B cell (primary cell): ENCODE measurements at regions of chr1 and their contacts with region 1.

Region 1: DNA sequence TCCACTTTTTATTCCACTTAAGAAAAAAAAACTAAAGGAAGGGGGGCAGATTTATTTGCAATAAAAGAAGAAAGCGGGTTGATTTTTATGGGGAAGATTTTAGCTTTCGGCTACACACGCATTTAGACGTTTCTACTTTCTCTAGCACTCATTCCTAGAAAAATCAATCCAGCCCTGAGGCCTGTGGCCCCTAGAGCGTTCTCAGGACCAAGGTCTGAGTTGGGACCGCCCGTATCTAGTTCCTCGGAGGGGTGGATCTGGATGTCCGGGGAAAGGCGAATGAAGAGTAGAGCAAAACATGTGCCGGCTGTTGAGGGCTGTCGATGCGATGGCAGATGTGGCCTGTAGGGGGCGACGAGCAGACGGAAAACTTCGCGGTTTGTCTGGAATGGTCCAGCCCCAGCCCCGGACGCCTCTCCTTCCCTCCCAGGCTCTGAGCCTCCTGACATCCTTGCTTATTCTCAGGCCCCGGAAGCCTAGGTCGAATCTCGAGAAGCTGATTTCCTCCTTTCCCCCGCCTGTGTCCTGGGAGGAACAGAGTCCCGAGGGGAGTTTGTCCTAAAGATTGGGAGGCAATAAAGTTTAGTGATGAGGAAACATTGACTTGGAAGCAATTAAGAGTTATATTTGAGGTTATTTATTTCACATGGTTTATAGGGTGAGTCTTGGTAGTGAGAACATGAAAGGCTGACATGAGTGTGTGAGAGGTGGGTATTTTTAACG is 5.2 kb downstream of the FOXD3 start:
- DNase-seq: peak; percentile 60
- ATAC-seq: no peak
- H3K4me3 ChIP-seq: no peak overlapping the region
- H3K4me3 Mint-ChIP-seq: no peak overlapping the region
- H3K27ac ChIP-seq: no peak overlapping the region
- H3K27ac Mint-ChIP-seq: peak overlapping the region; percentile 21
- H3K4me1 ChIP-seq: peaks cover 36 to 57% of the 10 kb centered on the region in 2 donors
- H3K4me1 Mint-ChIP-seq: peaks cover 15% of the 10 kb centered on the region
- H3K27me3 ChIP-seq: peaks cover 2 to 78% (median 72%) of the 10 kb centered on the region in 4 experiments
- H3K27me3 Mint-ChIP-seq: peaks cover 65% of the 10 kb centered on the region
- CTCF ChIP-seq: peak; percentile 64

Region 2: DNA sequence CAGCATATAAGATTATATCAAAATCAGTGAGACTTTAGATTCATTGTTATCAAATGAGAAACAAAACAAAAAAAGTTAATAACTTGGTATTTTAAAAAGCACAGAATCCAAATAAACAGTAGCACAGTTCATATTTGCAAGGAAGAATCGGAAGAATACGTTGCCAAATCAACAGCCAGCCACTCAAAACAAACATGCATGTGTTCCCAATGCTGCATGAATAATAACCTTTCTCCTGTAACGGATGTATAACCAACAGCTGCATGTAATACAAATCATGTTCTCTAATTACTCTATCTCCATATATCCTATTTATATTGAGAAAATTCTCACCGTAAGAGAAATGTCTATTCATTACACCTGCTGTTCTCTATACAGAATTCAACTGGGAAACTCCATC is 104.2 kb before region 1 on chr1:
- CTCF ChIA-PET with region 1: no interaction called
- POLR2A ChIA-PET with region 1: no interaction called
- intact Hi-C with region 1: no loop called
- DNase-seq: no peak
- ATAC-seq: no peak
- H3K4me3 ChIP-seq: no peak overlapping the region
- H3K4me3 Mint-ChIP-seq: no peak overlapping the region
- H3K27ac ChIP-seq: no peak overlapping the region
- H3K27ac Mint-ChIP-seq: no peak overlapping the region
- H3K4me1 ChIP-seq: no peaks in the 10 kb centered on the region
- H3K4me1 Mint-ChIP-seq: no peaks in the 10 kb centered on the region
- H3K27me3 ChIP-seq: no peaks in the 10 kb centered on the region
- H3K27me3 Mint-ChIP-seq: peaks cover 3% of the 10 kb centered on the region
- CTCF ChIP-seq: no peak

Region 3: DNA sequence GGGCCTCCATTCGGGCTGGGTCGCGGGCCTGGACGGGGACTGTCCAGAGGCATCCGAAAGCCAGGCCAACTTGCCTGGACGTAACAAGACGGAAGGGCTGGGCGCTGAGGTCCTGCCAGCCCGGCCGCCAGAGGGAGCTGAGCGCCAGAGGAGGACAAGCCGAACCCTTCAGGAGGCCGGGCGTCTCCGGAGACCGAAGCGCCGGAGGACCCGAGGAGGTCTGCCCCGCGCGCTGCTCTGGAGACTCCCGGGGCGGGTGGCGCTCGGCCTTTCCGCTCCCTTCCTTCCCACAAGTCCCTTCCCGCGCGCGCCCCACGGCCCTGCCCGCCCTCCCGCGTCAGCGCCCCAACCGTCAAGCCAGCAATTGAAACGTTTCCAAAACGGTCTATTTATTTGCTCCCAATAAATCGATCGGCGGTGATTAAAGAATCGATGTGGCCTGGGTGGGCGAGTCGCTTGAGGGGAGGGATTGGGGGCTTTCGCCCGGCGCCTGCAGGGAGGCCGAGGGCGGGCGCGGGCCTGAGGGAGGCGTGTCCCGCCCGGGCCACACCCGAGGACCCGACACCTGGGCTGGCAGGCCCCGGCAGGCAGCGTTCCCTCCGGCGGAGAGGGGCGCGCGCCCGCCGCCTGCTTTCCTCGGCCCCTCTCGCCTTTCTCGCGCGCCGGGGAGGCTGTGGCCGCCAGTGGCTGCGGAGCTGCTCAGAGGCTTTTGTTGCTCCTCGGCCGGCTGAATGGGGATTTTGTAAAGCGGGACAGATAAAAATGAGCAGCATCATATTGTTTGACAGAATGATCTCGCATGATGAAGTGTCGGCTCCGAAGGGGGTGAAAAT is 10.4 kb before region 1 on chr1:
- CTCF ChIA-PET with region 1: interaction called, 3 read pairs
- POLR2A ChIA-PET with region 1: no interaction called
- intact Hi-C with region 1: loop called (anchors 2 kb)
- DNase-seq: peak; percentile 70
- ATAC-seq: peak; percentile 74
- H3K4me3 ChIP-seq: peak overlapping the region; percentile 3 to 59 (median 42)
- H3K4me3 Mint-ChIP-seq: peak overlapping the region; percentile 66
- H3K27ac ChIP-seq: no peak overlapping the region
- H3K27ac Mint-ChIP-seq: no peak overlapping the region
- H3K4me1 ChIP-seq: peaks cover 43 to 52% of the 10 kb centered on the region in 2 donors
- H3K4me1 Mint-ChIP-seq: peaks cover 28% of the 10 kb centered on the region
- H3K27me3 ChIP-seq: peaks cover 0 to 74% (median 60%) of the 10 kb centered on the region in 4 experiments
- H3K27me3 Mint-ChIP-seq: peaks cover 66% of the 10 kb centered on the region
- CTCF ChIP-seq: peak; percentile 54